ENCODE measurements at regions of chr14 and their contacts with region 1.

Region 1: DNA sequence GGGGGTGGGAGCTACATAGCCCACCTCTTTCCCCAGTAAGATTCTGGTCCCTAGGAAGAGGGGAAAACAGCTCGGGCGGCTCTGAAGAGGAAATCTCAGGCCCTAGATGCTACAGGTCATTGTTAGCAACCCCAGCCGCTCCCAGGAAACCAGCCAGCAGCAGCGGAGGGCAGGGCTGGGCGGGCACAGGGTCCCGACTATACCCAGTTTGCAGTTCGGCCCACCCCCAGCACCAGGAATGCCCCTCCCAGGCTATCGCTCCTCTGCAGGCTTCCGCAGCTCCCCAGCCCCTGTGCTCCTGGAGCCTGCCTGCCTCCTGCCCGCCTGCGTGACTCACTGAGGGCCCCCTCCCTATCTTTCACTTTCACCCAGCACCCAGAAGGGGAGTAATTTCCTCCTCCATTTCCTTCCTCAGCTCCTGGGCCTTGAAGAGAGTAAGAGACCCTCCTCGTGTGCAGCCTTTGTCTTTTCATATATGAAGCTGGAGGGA is 27.2 kb upstream of the PNMA1 start:
- DNase-seq: peak in 13 of 14 experiments; percentile 45 to 84 (median 65)
- ATAC-seq: peak; percentile 79
- H3K4me3 ChIP-seq: peak overlapping the region; percentile 36
- H3K4me3 Mint-ChIP-seq: peak overlapping the region; percentile 87
- H3K27ac ChIP-seq: peak overlapping the region; percentile 76 to 78
- H3K27ac Mint-ChIP-seq: peak overlapping the region; percentile 99
- H3K4me1 ChIP-seq: peaks cover 83% of the 10 kb centered on the region
- H3K4me1 Mint-ChIP-seq: peaks cover 65% of the 10 kb centered on the region
- H3K27me3 ChIP-seq: no peaks in the 10 kb centered on the region
- H3K27me3 Mint-ChIP-seq: no peaks in the 10 kb centered on the region
- CTCF ChIP-seq: no peak

Region 2: DNA sequence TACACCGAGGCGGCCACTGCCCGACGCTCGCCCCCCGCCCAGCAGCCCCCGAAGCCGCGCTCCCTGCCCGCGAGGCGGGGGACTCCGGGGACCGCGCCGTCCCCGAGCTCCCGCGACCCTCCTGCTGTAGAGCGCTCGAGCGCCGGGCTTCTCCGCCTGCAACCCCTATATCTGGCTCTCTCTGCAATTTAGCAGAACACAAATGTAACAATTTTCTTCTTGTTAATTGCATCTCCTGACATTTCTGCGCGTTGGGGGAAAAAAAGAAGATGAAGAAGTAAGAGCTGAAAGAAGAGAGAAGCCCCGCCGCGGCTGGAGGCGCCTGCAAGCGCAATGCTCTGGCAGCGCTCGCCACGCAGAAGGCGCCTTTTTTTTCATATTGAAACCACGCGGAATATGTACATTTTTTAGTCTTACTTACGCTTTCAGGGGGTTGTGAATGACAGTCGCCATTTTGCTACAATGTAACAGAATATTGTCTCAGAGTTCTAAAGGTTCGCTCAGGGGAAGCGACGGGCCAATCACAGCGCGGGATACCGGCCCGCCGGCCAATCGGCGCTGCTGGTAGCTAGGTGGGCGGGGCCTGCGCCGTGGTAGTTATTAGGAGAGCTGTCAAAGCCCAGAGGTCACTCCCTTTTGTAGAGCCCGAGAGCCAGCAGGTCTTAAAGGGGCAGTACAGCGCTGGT is 847.7 kb before region 1 on chr14 and contains the start of gene DPF3:
- CTCF ChIA-PET with region 1: no interaction called
- POLR2A ChIA-PET with region 1: no interaction called
- intact Hi-C with region 1: no loop called
- DNase-seq: peak; percentile 82 to 95 (median 89)
- ATAC-seq: peak; percentile 96
- H3K4me3 ChIP-seq: peak within 1 kb of the TSS; percentile 76
- H3K4me3 Mint-ChIP-seq: peak within 1 kb of the TSS; percentile 89
- H3K27ac ChIP-seq: no peak within 1 kb of the TSS
- H3K27ac Mint-ChIP-seq: peak within 1 kb of the TSS; percentile 31
- H3K4me1 ChIP-seq: peaks cover 29% of the 10 kb centered on the region
- H3K4me1 Mint-ChIP-seq: peaks cover 29% of the 10 kb centered on the region
- H3K27me3 ChIP-seq: peaks cover 34 to 36% of the 10 kb centered on the region in 2 experiments
- H3K27me3 Mint-ChIP-seq: peaks cover 55% of the 10 kb centered on the region
- CTCF ChIP-seq: no peak
- total RNA-seq, gene DPF3: 0.27 to 0.31 TPM

Region 3: GRCh38 chr14:73713803-73714655 is 27.4 kb before region 1 on chr14 and contains the start of gene PNMA1:
- CTCF ChIA-PET with region 1: no interaction called
- POLR2A ChIA-PET with region 1: interaction called, 20 read pairs
- intact Hi-C with region 1: no loop called
- DNase-seq: peak; percentile 75 to 95 (median 82)
- ATAC-seq: peak; percentile 68
- H3K4me3 ChIP-seq: peak within 1 kb of the TSS; percentile 87
- H3K4me3 Mint-ChIP-seq: peak within 1 kb of the TSS; percentile 96
- H3K27ac ChIP-seq: peak within 1 kb of the TSS; percentile 73 to 77
- H3K27ac Mint-ChIP-seq: peak within 1 kb of the TSS; percentile 92
- H3K4me1 ChIP-seq: peaks cover 33% of the 10 kb centered on the region
- H3K4me1 Mint-ChIP-seq: peaks cover 33% of the 10 kb centered on the region
- H3K27me3 ChIP-seq: no peaks in the 10 kb centered on the region
- H3K27me3 Mint-ChIP-seq: no peaks in the 10 kb centered on the region
- CTCF ChIP-seq: no peak
- total RNA-seq, gene PNMA1: 52.6 to 55.9 TPM

Region 4: GRCh38 chr14:73753959-73754882 is 12.8 kb after region 1 on chr14:
- CTCF ChIA-PET with region 1: interaction called, 65 read pairs
- POLR2A ChIA-PET with region 1: interaction called, 282 read pairs
- intact Hi-C with region 1: loop called (anchors 1 to 2 kb)
- DNase-seq: peak in 5 of 14 experiments; percentile 34 to 77 (median 45)
- ATAC-seq: peak; percentile 14
- H3K4me3 ChIP-seq: peak overlapping the region; percentile 57
- H3K4me3 Mint-ChIP-seq: peak overlapping the region; percentile 88
- H3K27ac ChIP-seq: peak overlapping the region; percentile 85 to 88
- H3K27ac Mint-ChIP-seq: peak overlapping the region; percentile 99
- H3K4me1 ChIP-seq: peaks cover 95% of the 10 kb centered on the region
- H3K4me1 Mint-ChIP-seq: peaks cover 95% of the 10 kb centered on the region
- H3K27me3 ChIP-seq: no peaks in the 10 kb centered on the region
- H3K27me3 Mint-ChIP-seq: no peaks in the 10 kb centered on the region
- CTCF ChIP-seq: no peak

Region 5: GRCh38 chr14:73771848-73772638 is 30.6 kb after region 1 on chr14:
- CTCF ChIA-PET with region 1: interaction called, 6 read pairs
- POLR2A ChIA-PET with region 1: interaction called, 17 read pairs
- intact Hi-C with region 1: loop called in 1 of 2 experiments (anchors 2 kb)
- DNase-seq: peak in 12 of 14 experiments; percentile 39 to 84 (median 59)
- ATAC-seq: peak; percentile 83
- H3K4me3 ChIP-seq: no peak overlapping the region
- H3K4me3 Mint-ChIP-seq: peak overlapping the region; percentile 81
- H3K27ac ChIP-seq: peak overlapping the region; percentile 48 to 60
- H3K27ac Mint-ChIP-seq: peak overlapping the region; percentile 88
- H3K4me1 ChIP-seq: peaks cover 74% of the 10 kb centered on the region
- H3K4me1 Mint-ChIP-seq: peaks cover 75% of the 10 kb centered on the region
- H3K27me3 ChIP-seq: no peaks in the 10 kb centered on the region
- H3K27me3 Mint-ChIP-seq: no peaks in the 10 kb centered on the region
- CTCF ChIP-seq: no peak

Region 6: GRCh38 chr14:73777401-73777800 is 36.0 kb after region 1 on chr14:
- CTCF ChIA-PET with region 1: interaction called, 6 read pairs
- POLR2A ChIA-PET with region 1: interaction called, 17 read pairs
- intact Hi-C with region 1: no loop called
- DNase-seq: peak in 6 of 14 experiments; percentile 28 to 69 (median 44)
- ATAC-seq: peak; percentile 72
- H3K4me3 ChIP-seq: no peak overlapping the region
- H3K4me3 Mint-ChIP-seq: peak overlapping the region; percentile 39
- H3K27ac ChIP-seq: peak overlapping the region in 1 of 2 donors; percentile 10
- H3K27ac Mint-ChIP-seq: peak overlapping the region; percentile 73
- H3K4me1 ChIP-seq: peaks cover 57% of the 10 kb centered on the region
- H3K4me1 Mint-ChIP-seq: peaks cover 70% of the 10 kb centered on the region
- H3K27me3 ChIP-seq: no peaks in the 10 kb centered on the region
- H3K27me3 Mint-ChIP-seq: no peaks in the 10 kb centered on the region
- CTCF ChIP-seq: no peak

Region 7: DNA sequence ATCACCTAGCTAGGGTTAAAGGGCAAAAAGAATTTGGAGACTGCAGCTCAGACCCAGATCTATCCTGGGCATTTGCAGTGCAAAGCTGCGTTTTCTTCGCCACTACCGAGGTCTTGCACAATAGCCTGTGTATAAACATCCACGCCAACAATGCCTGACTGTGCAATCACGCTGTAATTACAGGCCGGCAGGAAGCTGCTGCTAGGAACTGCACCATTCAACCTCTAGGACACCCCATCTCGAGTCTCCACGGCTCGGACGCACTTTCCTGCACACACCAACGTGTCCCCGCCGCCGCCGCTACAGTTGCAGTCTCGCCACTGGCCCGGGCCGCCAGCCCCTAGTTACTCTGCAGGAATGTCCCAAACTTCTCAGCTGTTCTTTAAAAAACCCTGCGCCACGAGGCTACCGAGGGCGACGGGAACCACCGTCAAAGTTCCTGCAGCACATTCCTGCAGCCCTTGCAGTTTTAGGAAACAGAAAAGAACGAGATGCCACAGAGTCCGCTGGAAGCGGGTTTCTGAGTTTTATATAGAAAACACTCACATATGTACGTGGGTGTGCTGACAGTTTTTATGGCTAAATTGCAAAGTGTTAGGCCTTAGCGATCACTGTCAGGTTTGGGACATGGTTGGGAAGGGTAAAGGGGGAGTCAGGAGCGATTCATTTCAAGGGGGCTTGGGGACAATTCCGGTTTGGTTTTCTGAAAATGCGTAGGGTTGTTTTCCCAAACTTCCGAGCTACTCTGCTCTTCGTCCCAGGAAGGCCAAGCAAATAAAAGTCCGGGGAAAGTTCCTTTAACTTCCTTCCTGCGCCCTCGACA is 44.7 kb after region 1 on chr14:
- CTCF ChIA-PET with region 1: interaction called, 6 read pairs
- POLR2A ChIA-PET with region 1: interaction called, 96 read pairs
- intact Hi-C with region 1: loop called in 1 of 2 experiments (anchors 5 kb)
- DNase-seq: peak; percentile 51 to 84 (median 58)
- ATAC-seq: peak; percentile 70
- H3K4me3 ChIP-seq: peak overlapping the region; percentile 79
- H3K4me3 Mint-ChIP-seq: peak overlapping the region; percentile 96
- H3K27ac ChIP-seq: peak overlapping the region; percentile 67 to 76
- H3K27ac Mint-ChIP-seq: peak overlapping the region; percentile 96
- H3K4me1 ChIP-seq: peaks cover 67% of the 10 kb centered on the region
- H3K4me1 Mint-ChIP-seq: peaks cover 62% of the 10 kb centered on the region
- H3K27me3 ChIP-seq: no peaks in the 10 kb centered on the region
- H3K27me3 Mint-ChIP-seq: no peaks in the 10 kb centered on the region
- CTCF ChIP-seq: no peak

Region 8: DNA sequence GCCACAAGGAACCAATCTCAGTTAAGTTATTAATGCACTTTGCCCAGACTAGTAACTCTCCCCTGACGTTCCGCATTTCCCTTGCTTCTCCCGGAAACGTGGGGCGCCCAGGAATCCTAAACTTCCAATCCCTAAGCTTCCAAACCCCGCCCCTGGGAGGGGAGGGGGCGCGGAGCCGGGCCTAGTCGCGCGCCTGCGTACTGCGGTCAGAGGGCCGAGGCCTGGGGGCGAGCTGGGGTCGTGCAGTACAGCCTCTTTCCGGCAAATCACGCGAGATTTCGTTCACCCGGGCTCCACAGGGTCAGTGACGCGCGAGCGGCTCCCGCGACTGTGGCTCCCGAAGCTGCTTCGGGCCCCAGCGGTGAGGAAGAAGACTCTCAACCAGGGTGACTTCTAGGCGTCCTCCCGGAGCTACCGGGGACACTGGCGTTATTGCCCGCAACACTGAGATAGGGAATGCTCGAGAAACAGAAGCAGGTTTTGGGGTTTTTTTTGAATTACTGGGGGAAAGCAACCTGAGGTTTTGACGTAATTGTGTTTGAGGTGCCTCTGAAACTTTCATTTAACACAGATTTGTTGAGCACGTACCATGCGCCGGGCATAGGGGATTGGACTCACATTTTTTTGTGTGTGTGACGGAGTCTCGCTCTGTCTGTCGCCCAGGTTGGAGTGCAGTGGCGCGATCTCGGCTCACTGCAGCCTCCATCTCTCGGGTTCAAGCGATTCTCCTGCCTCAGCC is 110.4 kb after region 1 on chr14 and contains the start of gene PTGR2:
- CTCF ChIA-PET with region 1: no interaction called
- POLR2A ChIA-PET with region 1: interaction called, 10 read pairs
- intact Hi-C with region 1: no loop called
- DNase-seq: peak; percentile 77 to 97 (median 85)
- ATAC-seq: peak; percentile 93
- H3K4me3 ChIP-seq: peak within 1 kb of the TSS; percentile 63
- H3K4me3 Mint-ChIP-seq: peak within 1 kb of the TSS; percentile 91
- H3K27ac ChIP-seq: peak within 1 kb of the TSS; percentile 54 to 72
- H3K27ac Mint-ChIP-seq: peak within 1 kb of the TSS; percentile 94
- H3K4me1 ChIP-seq: peaks cover 17% of the 10 kb centered on the region
- H3K4me1 Mint-ChIP-seq: peaks cover 24% of the 10 kb centered on the region
- H3K27me3 ChIP-seq: no peaks in the 10 kb centered on the region
- H3K27me3 Mint-ChIP-seq: no peaks in the 10 kb centered on the region
- CTCF ChIP-seq: no peak
- total RNA-seq, gene PTGR2: 0.70 to 1.1 TPM

Measured in CD4-positive, alpha-beta T cell (primary cell).